ENCODE measurements at regions of chr12 and their contacts with region 1.

Region 1: DNA sequence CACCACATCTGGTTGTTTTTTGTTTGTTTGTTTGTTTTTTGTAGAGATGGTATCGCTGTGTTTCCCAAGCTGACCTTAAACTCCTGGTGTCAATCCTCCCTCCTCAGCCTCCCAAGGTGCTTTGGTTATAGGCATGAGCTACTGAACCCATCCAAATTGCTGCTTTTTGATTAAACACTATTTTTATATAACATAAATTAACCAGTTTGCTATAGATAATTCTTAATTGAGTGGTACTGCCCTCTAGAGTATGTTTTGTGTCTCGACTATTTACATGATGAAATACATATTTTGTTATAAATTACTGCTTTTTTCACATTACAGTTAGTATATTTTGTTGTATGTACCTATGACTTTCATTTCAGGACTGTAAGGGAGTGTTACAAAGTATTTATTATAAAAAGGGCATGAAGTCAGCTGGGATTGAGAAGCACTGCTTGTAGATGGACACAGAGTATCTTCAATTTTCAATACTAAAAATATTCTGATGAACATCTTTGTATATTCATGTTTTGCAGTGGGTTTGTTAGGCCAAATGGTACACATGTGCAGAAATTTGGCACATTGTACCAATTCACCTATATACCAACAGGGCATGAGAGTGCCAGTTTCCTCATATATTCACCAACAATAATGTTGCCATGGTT is 14.9 kb upstream of the SCAF11 start:
- DNase-seq: peak in 1 of 5 donors; percentile 23
- H3K4me3 ChIP-seq: no peak overlapping the region
- H3K4me3 Mint-ChIP-seq: no peak overlapping the region
- H3K27ac ChIP-seq: no peak overlapping the region
- H3K27ac Mint-ChIP-seq: peak overlapping the region in 4 of 7 donors; percentile 2 to 72 (median 60)
- H3K4me1 ChIP-seq: no peaks in the 10 kb centered on the region
- H3K4me1 Mint-ChIP-seq: no peaks in the 10 kb centered on the region
- H3K27me3 ChIP-seq: no peaks in the 10 kb centered on the region
- H3K27me3 Mint-ChIP-seq: no peaks in the 10 kb centered on the region

Region 2: DNA sequence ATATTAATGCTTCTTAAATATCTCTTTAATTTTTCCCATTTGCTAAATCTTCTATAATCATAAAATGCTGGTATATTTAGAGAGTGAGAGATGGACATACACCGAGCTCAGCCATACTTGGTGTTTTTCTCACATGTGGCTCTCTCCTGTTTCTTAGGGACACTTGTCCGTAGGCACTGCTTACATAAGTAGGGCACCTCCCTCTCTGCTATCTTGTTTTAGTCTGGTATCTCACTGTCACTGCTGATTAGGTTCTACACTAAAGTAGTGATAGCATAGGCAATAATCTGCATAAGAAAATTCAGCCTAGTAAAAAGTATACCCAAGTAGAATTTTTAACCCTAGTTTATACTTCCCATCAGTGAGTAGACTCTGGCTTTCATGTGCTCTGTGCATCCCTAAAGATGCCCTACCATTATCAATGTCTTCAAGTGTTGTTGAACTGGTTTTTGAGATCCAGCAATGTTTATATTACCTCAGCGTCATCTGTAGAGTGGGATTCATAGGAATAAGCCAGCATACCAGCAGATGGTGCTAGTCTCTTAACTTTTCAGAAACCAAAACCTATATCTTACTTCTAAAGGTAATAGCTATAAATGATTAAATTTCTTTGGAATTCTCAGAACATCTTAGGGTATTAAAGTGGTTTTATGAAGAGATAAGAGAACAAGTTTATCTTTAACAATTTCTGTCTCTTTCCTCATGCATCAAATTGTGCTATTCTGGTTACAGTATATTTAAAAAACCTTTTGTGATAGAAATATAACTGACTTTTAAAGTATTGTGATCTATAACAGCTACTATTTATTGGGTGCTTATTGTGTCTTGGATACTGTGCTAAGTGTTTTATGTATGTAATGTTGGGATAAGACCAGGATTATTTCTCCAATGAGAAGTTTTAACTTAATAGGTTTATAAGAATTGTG is 242.8 kb before region 1 on chr12:
- CTCF ChIA-PET with region 1: interaction called, 3 read pairs
- POLR2A ChIA-PET with region 1: no interaction called
- intact Hi-C with region 1: loop called (anchors 2 kb)
- DNase-seq: peak in 3 of 5 donors; percentile 11 to 19 (median 13)
- H3K4me3 ChIP-seq: no peak overlapping the region
- H3K4me3 Mint-ChIP-seq: peak overlapping the region in 2 of 8 donors; percentile 5 to 29
- H3K27ac ChIP-seq: no peak overlapping the region
- H3K27ac Mint-ChIP-seq: peak overlapping the region in 3 of 7 donors; percentile 26 to 29 (median 29)
- H3K4me1 ChIP-seq: peaks cover 24% of the 10 kb centered on the region
- H3K4me1 Mint-ChIP-seq: peaks cover 32 to 59% (median 44%) of the 10 kb centered on the region in 4 donors
- H3K27me3 ChIP-seq: no peaks in the 10 kb centered on the region
- H3K27me3 Mint-ChIP-seq: no peaks in the 10 kb centered on the region

Region 3: DNA sequence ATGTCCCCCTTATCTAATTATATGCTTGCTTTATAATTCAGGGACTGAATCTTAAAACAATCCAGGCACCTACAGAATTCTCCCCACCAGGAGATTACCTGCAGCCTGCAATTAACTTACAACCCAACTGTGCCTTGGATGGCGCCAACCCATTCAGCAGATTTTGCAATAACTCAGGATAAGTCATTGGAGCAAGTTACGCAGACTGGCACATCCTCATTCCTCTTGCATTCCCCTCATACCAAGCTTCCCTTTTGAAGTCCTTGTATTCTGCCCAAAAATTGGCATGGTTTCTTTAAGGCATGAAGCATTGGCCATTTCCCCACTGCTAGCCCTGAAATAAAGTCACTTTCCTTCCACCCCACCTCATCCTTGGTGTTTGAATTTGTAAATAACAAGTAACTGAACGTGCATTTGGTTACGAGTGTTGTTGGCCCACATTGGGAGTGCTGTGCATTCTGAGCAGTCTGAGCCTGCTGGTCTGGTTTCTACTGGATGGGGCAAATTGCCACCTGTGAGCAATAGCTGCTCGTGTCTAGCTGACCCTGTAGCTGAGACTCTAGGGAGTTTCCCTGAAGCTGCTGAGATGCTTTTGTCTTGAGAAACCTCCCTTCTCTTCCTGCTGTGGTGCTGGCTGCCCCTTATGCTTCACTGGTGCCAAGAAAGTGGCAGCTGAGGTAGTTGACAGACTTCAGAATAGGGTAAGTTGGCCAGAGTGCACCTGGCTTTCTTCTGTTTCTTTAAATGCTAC is 84.3 kb after region 1 on chr12:
- CTCF ChIA-PET with region 1: no interaction called
- POLR2A ChIA-PET with region 1: no interaction called
- intact Hi-C with region 1: no loop called
- DNase-seq: no peak
- H3K4me3 ChIP-seq: no peak overlapping the region
- H3K4me3 Mint-ChIP-seq: no peak overlapping the region
- H3K27ac ChIP-seq: no peak overlapping the region
- H3K27ac Mint-ChIP-seq: peak overlapping the region in 1 of 7 donors; percentile 25
- H3K4me1 ChIP-seq: no peaks in the 10 kb centered on the region
- H3K4me1 Mint-ChIP-seq: no peaks in the 10 kb centered on the region
- H3K27me3 ChIP-seq: no peaks in the 10 kb centered on the region
- H3K27me3 Mint-ChIP-seq: peaks cover 20 to 30% of the 10 kb centered on the region in 2 donors